Mammary epithelial cell (primary cell): ENCODE measurements at regions of chr19 and their contacts with region 1.

Region 1: GRCh38 chr19:18401580-18402112 is 4.2 kb upstream of the LRRC25 start:
- DNase-seq: peak; percentile 60
- H3K4me3 ChIP-seq: no peak overlapping the region
- H3K27ac ChIP-seq: no peak overlapping the region
- H3K4me1 ChIP-seq: peaks cover 3% of the 10 kb centered on the region
- H3K27me3 ChIP-seq: no peaks in the 10 kb centered on the region
- CTCF ChIP-seq: peak; percentile 24 to 54

Region 2: GRCh38 chr19:18160971-18161635 is 240.5 kb before region 1 on chr19:
- CTCF ChIA-PET with region 1: no interaction called
- dilution Hi-C with region 1: loop called (anchors 10 kb)
- in situ Hi-C with region 1: no loop called
- intact Hi-C with region 1: no loop called
- DNase-seq: peak; percentile 57
- H3K4me3 ChIP-seq: peak overlapping the region in 2 of 3 experiments; percentile 43 to 44
- H3K27ac ChIP-seq: no peak overlapping the region
- H3K4me1 ChIP-seq: peaks cover 40% of the 10 kb centered on the region
- H3K27me3 ChIP-seq: no peaks in the 10 kb centered on the region
- CTCF ChIP-seq: peak; percentile 41 to 50

Region 3: GRCh38 chr19:18340190-18340989 is 61.3 kb before region 1 on chr19 and contains the start of gene PGPEP1:
- CTCF ChIA-PET with region 1: no interaction called
- dilution Hi-C with region 1: loop called (anchors 10 kb)
- in situ Hi-C with region 1: loop called in 1 of 2 experiments (anchors 10 kb)
- intact Hi-C with region 1: no loop called
- DNase-seq: no peak
- H3K4me3 ChIP-seq: peak within 1 kb of the TSS; percentile 61 to 72 (median 64)
- H3K27ac ChIP-seq: no peak within 1 kb of the TSS
- H3K4me1 ChIP-seq: peaks cover 18% of the 10 kb centered on the region
- H3K27me3 ChIP-seq: no peaks in the 10 kb centered on the region
- CTCF ChIP-seq: no peak
- total RNA-seq, gene PGPEP1: 16.3 to 18.7 TPM

Region 4: DNA sequence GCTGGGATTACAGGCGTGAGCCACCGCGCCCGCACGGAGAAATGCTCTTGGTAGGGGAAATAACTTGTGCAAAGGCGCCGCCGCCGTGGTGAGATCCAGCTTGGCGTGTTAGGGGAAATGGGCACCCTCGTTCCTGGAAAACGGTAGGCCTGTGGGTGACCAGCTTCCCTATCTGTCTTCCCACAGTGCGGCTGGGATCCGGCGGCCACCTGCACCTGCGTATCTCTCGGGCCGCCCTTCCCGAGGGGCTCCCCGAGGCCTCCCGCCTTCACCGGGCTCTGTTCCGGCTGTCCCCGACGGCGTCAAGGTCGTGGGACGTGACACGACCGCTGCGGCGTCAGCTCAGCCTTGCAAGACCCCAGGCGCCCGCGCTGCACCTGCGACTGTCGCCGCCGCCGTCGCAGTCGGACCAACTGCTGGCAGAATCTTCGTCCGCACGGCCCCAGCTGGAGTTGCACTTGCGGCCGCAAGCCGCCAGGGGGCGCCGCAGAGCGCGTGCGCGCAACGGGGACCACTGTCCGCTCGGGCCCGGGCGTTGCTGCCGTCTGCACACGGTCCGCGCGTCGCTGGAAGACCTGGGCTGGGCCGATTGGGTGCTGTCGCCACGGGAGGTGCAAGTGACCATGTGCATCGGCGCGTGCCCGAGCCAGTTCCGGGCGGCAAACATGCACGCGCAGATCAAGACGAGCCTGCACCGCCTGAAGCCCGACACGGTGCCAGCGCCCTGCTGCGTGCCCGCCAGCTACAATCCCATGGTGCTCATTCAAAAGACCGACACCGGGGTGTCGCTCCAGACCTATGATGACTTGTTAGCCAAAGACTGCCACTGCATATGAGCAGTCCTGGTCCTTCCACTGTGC is 13.3 kb before region 1 on chr19:
- CTCF ChIA-PET with region 1: no interaction called
- dilution Hi-C with region 1: no loop called
- in situ Hi-C with region 1: no loop called
- intact Hi-C with region 1: no loop called
- DNase-seq: peak; percentile 43
- H3K4me3 ChIP-seq: peak overlapping the region; percentile 57 to 64 (median 60)
- H3K27ac ChIP-seq: no peak overlapping the region
- H3K4me1 ChIP-seq: peaks cover 26% of the 10 kb centered on the region
- H3K27me3 ChIP-seq: no peaks in the 10 kb centered on the region
- CTCF ChIP-seq: peak; percentile 73 to 96

Region 5: GRCh38 chr19:18450931-18451845 is 49.5 kb after region 1 on chr19:
- CTCF ChIA-PET with region 1: no interaction called
- dilution Hi-C with region 1: no loop called
- in situ Hi-C with region 1: no loop called
- intact Hi-C with region 1: no loop called
- DNase-seq: no peak
- H3K4me3 ChIP-seq: no peak overlapping the region
- H3K27ac ChIP-seq: no peak overlapping the region
- H3K4me1 ChIP-seq: peaks cover 9% of the 10 kb centered on the region
- H3K27me3 ChIP-seq: no peaks in the 10 kb centered on the region
- CTCF ChIP-seq: peak; percentile 92 to 98

Region 6: GRCh38 chr19:18496167-18496979 is 94.7 kb after region 1 on chr19:
- CTCF ChIA-PET with region 1: no interaction called
- dilution Hi-C with region 1: loop called (anchors 10 kb)
- in situ Hi-C with region 1: no loop called
- intact Hi-C with region 1: no loop called
- DNase-seq: peak; percentile 90
- H3K4me3 ChIP-seq: no peak overlapping the region
- H3K27ac ChIP-seq: peak overlapping the region; percentile 36
- H3K4me1 ChIP-seq: peaks cover 29% of the 10 kb centered on the region
- H3K27me3 ChIP-seq: no peaks in the 10 kb centered on the region
- CTCF ChIP-seq: peak in 1 of 2 donors; percentile 38

Region 7: GRCh38 chr19:18507021-18507726 is 105.5 kb after region 1 on chr19:
- CTCF ChIA-PET with region 1: no interaction called
- dilution Hi-C with region 1: no loop called
- in situ Hi-C with region 1: no loop called
- intact Hi-C with region 1: no loop called
- DNase-seq: no peak
- H3K4me3 ChIP-seq: no peak overlapping the region
- H3K27ac ChIP-seq: no peak overlapping the region
- H3K4me1 ChIP-seq: peaks cover 35% of the 10 kb centered on the region
- H3K27me3 ChIP-seq: no peaks in the 10 kb centered on the region
- CTCF ChIP-seq: no peak

Region 8: GRCh38 chr19:18756896-18757295 is 355.2 kb after region 1 on chr19:
- CTCF ChIA-PET with region 1: no interaction called
- dilution Hi-C with region 1: loop called (anchors 10 kb)
- in situ Hi-C with region 1: no loop called
- intact Hi-C with region 1: no loop called
- DNase-seq: peak; percentile 90
- H3K4me3 ChIP-seq: no peak overlapping the region
- H3K27ac ChIP-seq: peak overlapping the region; percentile 66
- H3K4me1 ChIP-seq: peaks cover 21% of the 10 kb centered on the region
- H3K27me3 ChIP-seq: no peaks in the 10 kb centered on the region
- CTCF ChIP-seq: peak in 1 of 2 donors; percentile 23